GM12878 (cell line): ENCODE measurements at regions of chr18 and their contacts with region 1.

Region 1: GRCh38 chr18:50429207-50429948 is 54.5 kb downstream of the SKA1 start:
- DNase-seq: no peak
- ATAC-seq: peak; percentile 59
- H3K4me3 ChIP-seq: no peak overlapping the region
- H3K27ac ChIP-seq: no peak overlapping the region
- H3K4me1 ChIP-seq: no peaks in the 10 kb centered on the region
- H3K27me3 ChIP-seq: peaks cover 2 to 3% of the 10 kb centered on the region in 2 experiments; a peak in 2 of 4 replicates
- CTCF ChIP-seq: peak; percentile 35 to 49 (median 39); a peak in 5 of 6 replicates
- EP300 ChIP-seq: no peak
- POLR2A ChIP-seq: no peak
- RAD21 ChIP-seq: peak; percentile 42

Region 2: DNA sequence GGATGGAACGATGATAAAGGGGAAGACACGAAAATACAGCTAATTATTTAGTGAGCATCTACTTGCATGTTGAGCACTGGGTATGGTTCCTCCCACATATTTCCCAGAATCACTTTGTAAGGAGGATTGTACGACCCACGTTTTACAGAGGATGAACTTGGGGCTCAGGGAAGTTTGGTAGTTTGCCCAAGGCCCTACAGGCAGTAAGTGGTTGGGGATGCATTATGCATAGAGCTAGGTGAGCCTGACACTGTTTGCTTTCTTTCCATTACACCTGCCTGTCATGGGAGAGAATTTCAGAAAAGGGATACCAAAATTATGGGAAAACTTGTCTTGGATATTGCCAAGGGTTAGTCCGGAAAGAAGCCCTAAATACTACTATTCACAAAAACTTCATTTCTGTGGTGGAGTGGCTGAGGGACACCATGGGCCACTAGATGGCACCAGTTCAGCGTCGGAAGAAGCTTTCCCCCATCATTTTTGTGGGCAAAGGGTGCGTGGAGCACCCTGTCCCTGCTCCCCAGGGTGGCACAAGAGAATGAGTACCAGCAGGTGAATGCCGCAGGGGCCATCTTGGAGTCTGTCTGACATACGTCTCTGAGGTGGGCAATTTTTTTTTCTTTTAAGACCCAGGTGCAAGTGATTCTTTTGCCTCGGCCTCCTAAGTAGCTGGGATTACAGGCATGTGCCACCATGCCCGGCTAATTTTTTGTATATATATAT is 918.8 kb before region 1 on chr18:
- CTCF ChIA-PET with region 1: interaction called, 11 read pairs
- POLR2A ChIA-PET with region 1: no interaction called
- RAD21 ChIA-PET with region 1: interaction called, 9 read pairs
- SMC1A ChIA-PET with region 1: interaction called, 4 read pairs
- in situ Hi-C with region 1: no loop called
- intact Hi-C with region 1: no loop called
- DNase-seq: no peak
- ATAC-seq: peak; percentile 92
- H3K4me3 ChIP-seq: no peak overlapping the region
- H3K27ac ChIP-seq: no peak overlapping the region
- H3K4me1 ChIP-seq: no peaks in the 10 kb centered on the region
- H3K27me3 ChIP-seq: no peaks in the 10 kb centered on the region
- CTCF ChIP-seq: peak; percentile 86 to 90 (median 87)
- EP300 ChIP-seq: no peak
- POLR2A ChIP-seq: no peak
- RAD21 ChIP-seq: peak; percentile 82

Region 3: DNA sequence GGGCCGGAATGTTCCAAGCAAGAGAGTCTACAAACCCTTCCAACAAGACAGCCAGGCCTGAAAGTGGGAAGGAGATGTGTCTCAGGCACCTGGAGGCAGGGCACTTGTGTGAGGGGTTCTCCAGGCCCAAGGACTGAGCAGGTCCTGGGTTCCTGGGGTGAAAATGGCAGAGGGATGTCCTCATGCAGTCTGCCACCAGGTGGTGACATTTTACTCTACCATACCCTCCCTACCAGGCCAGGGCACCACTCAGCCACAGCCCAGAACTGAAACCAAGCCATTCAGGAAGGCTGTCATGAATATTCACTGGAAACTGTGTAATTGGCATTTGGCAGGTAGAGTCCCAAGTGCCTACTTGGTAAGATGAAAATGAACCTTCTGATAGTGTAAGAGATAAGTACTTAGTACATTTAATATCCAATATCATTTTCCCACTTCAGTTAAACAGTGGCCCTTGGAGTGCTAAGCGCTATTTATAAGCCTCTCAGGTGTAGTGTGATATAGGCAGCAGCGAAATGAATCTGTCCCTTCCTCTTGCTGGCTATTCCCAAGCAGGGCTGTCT is 419.5 kb before region 1 on chr18:
- CTCF ChIA-PET with region 1: interaction called, 6 read pairs
- POLR2A ChIA-PET with region 1: no interaction called
- RAD21 ChIA-PET with region 1: no interaction called
- SMC1A ChIA-PET with region 1: interaction called, 5 read pairs
- in situ Hi-C with region 1: loop called (anchors 10 kb)
- intact Hi-C with region 1: loop called (anchors 2 kb)
- DNase-seq: peak; percentile 25
- ATAC-seq: peak; percentile 99
- H3K4me3 ChIP-seq: no peak overlapping the region
- H3K27ac ChIP-seq: no peak overlapping the region
- H3K4me1 ChIP-seq: no peaks in the 10 kb centered on the region
- H3K27me3 ChIP-seq: no peaks in the 10 kb centered on the region
- CTCF ChIP-seq: peak; percentile 69 to 73 (median 72); a peak in 5 of 6 replicates
- EP300 ChIP-seq: no peak
- POLR2A ChIP-seq: no peak
- RAD21 ChIP-seq: peak; percentile 63

Region 4: DNA sequence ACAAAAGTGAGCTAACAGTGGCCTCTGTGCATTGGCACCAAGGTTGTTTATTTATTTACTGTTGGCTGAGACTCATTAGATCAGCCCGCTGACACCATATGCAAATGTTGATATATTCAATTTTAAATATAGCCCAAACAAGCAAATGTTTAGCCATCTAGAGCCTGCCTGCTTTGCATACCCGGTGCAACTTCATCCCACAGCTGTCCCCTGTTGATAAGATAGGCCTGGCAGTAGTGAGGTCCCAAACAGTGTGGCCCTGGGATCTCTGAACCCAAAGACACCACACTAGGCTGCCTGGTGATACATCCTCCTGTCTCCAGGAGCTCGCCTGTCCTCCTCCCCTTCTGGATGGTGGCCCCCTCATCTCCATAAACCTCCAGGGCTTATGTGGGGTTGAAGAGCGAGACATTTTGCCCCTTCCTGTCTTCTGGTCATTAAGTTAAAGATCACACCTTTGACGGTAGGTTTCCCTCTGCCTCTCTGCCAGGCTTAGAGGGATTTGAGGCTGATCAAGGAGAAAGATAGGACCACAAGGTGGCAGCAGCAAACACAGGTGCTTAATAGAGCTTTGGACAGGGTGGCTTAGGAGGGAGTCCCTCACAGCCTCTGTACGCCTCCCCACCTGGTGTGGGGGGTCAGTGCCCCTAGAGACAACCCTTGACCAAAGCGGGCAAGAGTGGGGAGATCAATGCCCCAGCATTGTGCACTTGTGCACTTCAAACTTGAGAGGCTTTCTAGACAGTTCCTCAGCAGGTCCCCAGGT is 210.8 kb before region 1 on chr18:
- CTCF ChIA-PET with region 1: interaction called, 33 read pairs
- POLR2A ChIA-PET with region 1: no interaction called
- RAD21 ChIA-PET with region 1: interaction called, 13 read pairs
- SMC1A ChIA-PET with region 1: interaction called, 14 read pairs
- in situ Hi-C with region 1: no loop called
- intact Hi-C with region 1: loop called (anchors 2 kb)
- DNase-seq: peak; percentile 21
- ATAC-seq: peak; percentile 98
- H3K4me3 ChIP-seq: no peak overlapping the region
- H3K27ac ChIP-seq: no peak overlapping the region
- H3K4me1 ChIP-seq: peaks cover 5% of the 10 kb centered on the region
- H3K27me3 ChIP-seq: no peaks in the 10 kb centered on the region; a peak in 1 of 4 replicates
- CTCF ChIP-seq: peak; percentile 47 to 63 (median 50); a peak in 4 of 6 replicates
- EP300 ChIP-seq: no peak
- POLR2A ChIP-seq: no peak
- RAD21 ChIP-seq: peak; percentile 69

Region 5: GRCh38 chr18:50410894-50411293 is 18.5 kb before region 1 on chr18:
- CTCF ChIA-PET with region 1: interaction called, 24 read pairs
- POLR2A ChIA-PET with region 1: no interaction called
- RAD21 ChIA-PET with region 1: interaction called, 3 read pairs
- SMC1A ChIA-PET with region 1: interaction called, 3 read pairs
- in situ Hi-C with region 1: no loop called
- intact Hi-C with region 1: no loop called
- DNase-seq: no peak
- ATAC-seq: no peak
- H3K4me3 ChIP-seq: no peak overlapping the region
- H3K27ac ChIP-seq: no peak overlapping the region
- H3K4me1 ChIP-seq: no peaks in the 10 kb centered on the region
- H3K27me3 ChIP-seq: no peaks in the 10 kb centered on the region
- CTCF ChIP-seq: no peak
- EP300 ChIP-seq: no peak
- POLR2A ChIP-seq: no peak
- RAD21 ChIP-seq: no peak

Region 6: GRCh38 chr18:50419131-50419530 is 10.2 kb before region 1 on chr18:
- CTCF ChIA-PET with region 1: interaction called, 24 read pairs
- POLR2A ChIA-PET with region 1: no interaction called
- RAD21 ChIA-PET with region 1: no interaction called
- SMC1A ChIA-PET with region 1: interaction called, 4 read pairs
- in situ Hi-C with region 1: no loop called
- intact Hi-C with region 1: no loop called
- DNase-seq: no peak
- ATAC-seq: no peak
- H3K4me3 ChIP-seq: no peak overlapping the region
- H3K27ac ChIP-seq: no peak overlapping the region
- H3K4me1 ChIP-seq: no peaks in the 10 kb centered on the region
- H3K27me3 ChIP-seq: no peaks in the 10 kb centered on the region; a peak in 1 of 4 replicates
- CTCF ChIP-seq: no peak
- EP300 ChIP-seq: no peak
- POLR2A ChIP-seq: no peak
- RAD21 ChIP-seq: no peak

Region 7: DNA sequence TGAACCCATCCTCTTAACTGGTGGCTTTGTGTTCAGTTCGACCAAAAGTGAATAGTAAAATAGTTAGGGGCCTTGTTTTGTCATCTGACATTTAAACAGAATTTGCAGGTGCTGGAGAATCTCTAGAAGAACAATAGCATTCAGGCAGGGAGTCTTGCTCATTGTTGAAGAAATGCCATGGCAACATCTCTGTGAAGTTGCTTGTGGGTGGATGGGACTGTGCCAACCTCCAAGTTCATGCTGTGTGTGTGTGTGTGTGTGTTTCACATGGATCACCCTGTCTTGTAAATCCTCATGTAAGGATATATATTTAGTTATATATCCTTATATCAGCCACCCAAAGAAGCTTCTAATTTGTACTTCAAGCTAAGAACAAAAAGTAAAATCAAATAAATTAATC is 12.1 kb after region 1 on chr18:
- CTCF ChIA-PET with region 1: interaction called, 12 read pairs
- POLR2A ChIA-PET with region 1: no interaction called
- RAD21 ChIA-PET with region 1: no interaction called
- SMC1A ChIA-PET with region 1: interaction called, 3 read pairs
- in situ Hi-C with region 1: no loop called
- intact Hi-C with region 1: no loop called
- DNase-seq: no peak
- ATAC-seq: no peak
- H3K4me3 ChIP-seq: no peak overlapping the region
- H3K27ac ChIP-seq: no peak overlapping the region
- H3K4me1 ChIP-seq: no peaks in the 10 kb centered on the region
- H3K27me3 ChIP-seq: no peaks in the 10 kb centered on the region
- CTCF ChIP-seq: no peak
- EP300 ChIP-seq: no peak
- POLR2A ChIP-seq: no peak
- RAD21 ChIP-seq: no peak

Region 8: GRCh38 chr18:50469380-50469781 is 40.0 kb after region 1 on chr18:
- CTCF ChIA-PET with region 1: no interaction called
- POLR2A ChIA-PET with region 1: no interaction called
- RAD21 ChIA-PET with region 1: no interaction called
- SMC1A ChIA-PET with region 1: no interaction called
- in situ Hi-C with region 1: no loop called
- intact Hi-C with region 1: no loop called
- DNase-seq: no peak
- ATAC-seq: no peak
- H3K4me3 ChIP-seq: no peak overlapping the region
- H3K27ac ChIP-seq: no peak overlapping the region
- H3K4me1 ChIP-seq: no peaks in the 10 kb centered on the region
- H3K27me3 ChIP-seq: 0 out of 4 replicates have a peak, but pooled peaks cover 0 to 2% of the 10 kb centered on the region in 2 experiments
- CTCF ChIP-seq: no peak
- EP300 ChIP-seq: no peak
- POLR2A ChIP-seq: no peak
- RAD21 ChIP-seq: no peak